ENCODE measurements at regions of chr17 and their contacts with region 1.

Region 1: GRCh38 chr17:64020056-64020766 is at the start of gene ICAM2:
- DNase-seq: peak; percentile 69
- ATAC-seq: peak; percentile 78
- H3K4me3 Mint-ChIP-seq: peak within 1 kb of the TSS; percentile 97
- H3K27ac Mint-ChIP-seq: peak within 1 kb of the TSS; percentile 99
- H3K4me1 Mint-ChIP-seq: peaks cover 81% of the 10 kb centered on the region
- H3K27me3 Mint-ChIP-seq: no peaks in the 10 kb centered on the region
- CTCF ChIP-seq: no peak
- total RNA-seq, gene ICAM2: 44.5 and 44.7 TPM in 2 replicates

Region 2: DNA sequence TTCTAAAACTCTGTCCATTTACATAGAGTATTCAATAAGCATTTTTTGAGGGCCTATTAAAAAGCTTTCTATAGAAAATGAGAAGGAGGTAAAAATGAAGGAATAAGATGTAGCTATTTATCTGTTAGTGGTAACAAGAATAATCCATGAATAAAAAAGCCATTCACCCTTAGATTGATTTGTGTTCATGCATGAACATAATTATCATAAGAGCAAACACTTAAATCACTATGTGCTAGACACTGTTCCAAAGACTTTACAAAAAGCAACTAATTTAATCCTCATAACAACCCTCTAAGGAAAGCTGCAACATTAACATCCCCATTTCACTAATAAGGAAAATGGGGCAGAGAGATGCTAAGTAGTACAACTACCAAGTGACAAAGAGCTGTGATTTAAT is 253.5 kb before region 1 on chr17:
- CTCF ChIA-PET with region 1: no interaction called
- POLR2A ChIA-PET with region 1: no interaction called
- intact Hi-C with region 1: no loop called
- DNase-seq: no peak
- ATAC-seq: no peak
- H3K4me3 Mint-ChIP-seq: no peak overlapping the region
- H3K27ac Mint-ChIP-seq: no peak overlapping the region
- H3K4me1 Mint-ChIP-seq: peaks cover 36% of the 10 kb centered on the region
- H3K27me3 Mint-ChIP-seq: no peaks in the 10 kb centered on the region
- CTCF ChIP-seq: no peak

Region 3: DNA sequence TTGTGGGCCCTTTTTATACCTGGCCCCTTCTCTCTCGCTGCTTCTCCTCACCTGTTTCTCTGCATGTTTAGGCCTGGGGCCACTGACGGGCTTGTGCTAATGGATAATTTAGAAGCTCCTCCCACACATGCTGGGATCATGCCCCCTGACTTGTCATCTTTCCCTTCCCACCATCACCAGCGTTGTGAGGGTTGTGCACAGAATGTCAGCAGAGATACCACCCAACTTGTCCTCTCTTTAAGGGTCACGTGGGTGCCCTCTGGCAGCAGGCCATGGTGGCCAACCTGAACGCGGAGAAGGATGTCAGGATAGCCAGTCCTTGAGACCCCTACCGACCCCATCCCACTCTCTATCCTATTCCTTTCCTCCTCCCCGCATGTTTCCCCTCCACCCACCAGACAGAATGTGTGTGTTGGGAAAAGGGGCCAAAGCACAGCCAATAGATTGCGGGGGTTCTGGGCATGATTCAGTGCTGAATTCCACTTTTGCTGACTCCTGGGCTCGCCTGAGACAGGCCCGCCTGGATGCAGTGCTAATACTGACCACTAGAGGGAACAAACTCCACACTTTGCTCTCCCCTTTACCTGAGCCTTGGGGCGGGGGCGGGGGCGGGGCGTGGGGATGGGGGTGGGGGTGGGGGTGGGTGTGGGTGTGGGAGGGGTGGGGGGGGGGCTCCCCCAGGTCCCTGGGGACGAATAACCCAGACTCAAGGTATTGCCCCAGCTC is 138.2 kb before region 1 on chr17 and contains the start of gene GH2:
- CTCF ChIA-PET with region 1: no interaction called
- POLR2A ChIA-PET with region 1: no interaction called
- intact Hi-C with region 1: no loop called
- DNase-seq: peak; percentile 36
- ATAC-seq: peak; percentile 89
- H3K4me3 Mint-ChIP-seq: no peak within 1 kb of the TSS
- H3K27ac Mint-ChIP-seq: no peak within 1 kb of the TSS
- H3K4me1 Mint-ChIP-seq: peaks cover 11% of the 10 kb centered on the region
- H3K27me3 Mint-ChIP-seq: no peaks in the 10 kb centered on the region
- CTCF ChIP-seq: no peak
- total RNA-seq, gene GH2: not detected in 2 replicates

Region 4: DNA sequence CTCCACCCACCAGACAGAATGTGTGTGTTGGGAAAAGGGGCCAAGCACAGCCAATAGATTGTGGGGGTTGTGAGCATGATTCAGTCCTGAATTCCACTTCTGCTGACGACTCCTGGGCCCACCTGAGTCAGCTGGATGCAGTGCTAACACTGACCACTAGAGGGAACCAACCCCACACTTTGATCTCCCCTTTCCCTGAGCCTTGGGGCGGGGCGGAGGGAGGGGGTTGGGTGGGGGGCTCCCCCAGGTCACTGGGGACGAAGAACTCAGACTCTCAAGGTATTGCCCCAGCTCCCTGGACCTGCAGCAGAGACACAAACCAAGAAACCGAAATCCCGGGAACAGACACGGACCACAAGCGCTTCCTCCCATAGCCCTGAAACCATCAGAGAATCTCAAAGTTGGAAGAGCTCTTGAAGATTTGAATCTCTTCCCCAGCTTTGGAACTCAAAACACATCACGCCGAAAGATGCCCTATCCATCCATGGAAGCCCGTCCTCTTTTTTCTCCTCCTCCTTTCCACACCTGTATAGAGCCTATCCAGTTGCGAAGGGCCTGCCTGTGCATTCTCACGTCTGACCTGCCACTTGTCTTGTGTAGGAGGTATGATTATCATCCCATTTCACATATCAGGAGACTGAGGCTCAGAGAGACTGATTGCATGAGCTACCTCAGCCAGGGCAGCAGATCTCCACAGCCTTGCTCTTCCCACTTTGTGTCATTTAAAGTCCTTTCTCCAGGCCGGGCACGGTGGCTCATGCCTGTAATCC is 108.4 kb before region 1 on chr17:
- CTCF ChIA-PET with region 1: interaction called, 102 read pairs
- POLR2A ChIA-PET with region 1: interaction called, 13 read pairs
- intact Hi-C with region 1: loop called (anchors 1 kb)
- DNase-seq: peak; percentile 59
- ATAC-seq: peak; percentile 57
- H3K4me3 Mint-ChIP-seq: no peak overlapping the region
- H3K27ac Mint-ChIP-seq: peak overlapping the region; percentile 35
- H3K4me1 Mint-ChIP-seq: peaks cover 52% of the 10 kb centered on the region
- H3K27me3 Mint-ChIP-seq: peaks cover 1% of the 10 kb centered on the region
- CTCF ChIP-seq: no peak

Region 5: GRCh38 chr17:63931099-63931561 is 89.1 kb before region 1 on chr17:
- CTCF ChIA-PET with region 1: interaction called, 11 read pairs
- POLR2A ChIA-PET with region 1: interaction called, 48 read pairs
- intact Hi-C with region 1: no loop called
- DNase-seq: peak; percentile 67
- ATAC-seq: peak; percentile 45
- H3K4me3 Mint-ChIP-seq: peak overlapping the region; percentile 98
- H3K27ac Mint-ChIP-seq: peak overlapping the region; percentile 96
- H3K4me1 Mint-ChIP-seq: peaks cover 89% of the 10 kb centered on the region
- H3K27me3 Mint-ChIP-seq: no peaks in the 10 kb centered on the region
- CTCF ChIP-seq: no peak

Region 6: DNA sequence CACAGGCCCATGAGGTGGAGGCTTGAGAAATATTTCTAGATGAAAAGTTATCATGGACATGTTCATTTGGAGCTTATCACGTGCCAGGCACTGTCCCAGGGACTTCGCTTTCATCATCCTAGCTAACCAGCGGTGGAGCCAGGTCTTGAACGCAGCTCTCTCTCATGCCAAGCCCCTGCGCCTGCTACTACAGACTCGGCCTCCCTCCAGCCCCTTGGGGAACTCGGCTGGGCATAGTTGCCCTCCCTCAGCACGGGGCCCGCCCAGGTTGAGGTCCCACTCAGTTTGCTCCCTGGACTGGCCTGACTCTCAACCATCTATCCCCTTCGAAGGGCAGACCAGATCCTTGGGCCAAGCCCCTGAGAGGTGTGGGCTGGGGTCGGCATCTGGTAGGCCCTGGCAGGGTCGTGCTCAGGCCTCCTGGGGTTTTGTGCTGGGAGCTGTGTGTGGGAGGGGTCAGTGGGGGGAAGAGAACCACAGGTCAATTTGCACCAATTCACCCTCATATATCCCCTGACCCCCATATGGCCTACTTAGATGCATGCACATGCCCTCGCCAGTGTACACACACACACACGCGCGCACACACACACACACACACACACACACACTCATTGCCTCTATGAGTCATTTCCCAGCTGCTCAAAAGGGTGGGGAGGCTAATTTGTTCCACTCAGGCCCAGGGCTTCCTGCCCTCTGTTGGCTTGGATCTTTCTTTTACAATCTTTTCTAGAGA is 35.4 kb before region 1 on chr17:
- CTCF ChIA-PET with region 1: interaction called, 21 read pairs
- POLR2A ChIA-PET with region 1: interaction called, 12 read pairs
- intact Hi-C with region 1: loop called (anchors 1 kb)
- DNase-seq: no peak
- ATAC-seq: peak; percentile 89
- H3K4me3 Mint-ChIP-seq: no peak overlapping the region
- H3K27ac Mint-ChIP-seq: no peak overlapping the region
- H3K4me1 Mint-ChIP-seq: peaks cover 16% of the 10 kb centered on the region
- H3K27me3 Mint-ChIP-seq: no peaks in the 10 kb centered on the region
- CTCF ChIP-seq: no peak

Region 7: GRCh38 chr17:64103391-64104364 is 83.5 kb after region 1 on chr17:
- CTCF ChIA-PET with region 1: no interaction called
- POLR2A ChIA-PET with region 1: no interaction called
- intact Hi-C with region 1: no loop called
- DNase-seq: no peak
- ATAC-seq: no peak
- H3K4me3 Mint-ChIP-seq: no peak overlapping the region
- H3K27ac Mint-ChIP-seq: no peak overlapping the region
- H3K4me1 Mint-ChIP-seq: no peaks in the 10 kb centered on the region
- H3K27me3 Mint-ChIP-seq: no peaks in the 10 kb centered on the region
- CTCF ChIP-seq: no peak

Region 8: DNA sequence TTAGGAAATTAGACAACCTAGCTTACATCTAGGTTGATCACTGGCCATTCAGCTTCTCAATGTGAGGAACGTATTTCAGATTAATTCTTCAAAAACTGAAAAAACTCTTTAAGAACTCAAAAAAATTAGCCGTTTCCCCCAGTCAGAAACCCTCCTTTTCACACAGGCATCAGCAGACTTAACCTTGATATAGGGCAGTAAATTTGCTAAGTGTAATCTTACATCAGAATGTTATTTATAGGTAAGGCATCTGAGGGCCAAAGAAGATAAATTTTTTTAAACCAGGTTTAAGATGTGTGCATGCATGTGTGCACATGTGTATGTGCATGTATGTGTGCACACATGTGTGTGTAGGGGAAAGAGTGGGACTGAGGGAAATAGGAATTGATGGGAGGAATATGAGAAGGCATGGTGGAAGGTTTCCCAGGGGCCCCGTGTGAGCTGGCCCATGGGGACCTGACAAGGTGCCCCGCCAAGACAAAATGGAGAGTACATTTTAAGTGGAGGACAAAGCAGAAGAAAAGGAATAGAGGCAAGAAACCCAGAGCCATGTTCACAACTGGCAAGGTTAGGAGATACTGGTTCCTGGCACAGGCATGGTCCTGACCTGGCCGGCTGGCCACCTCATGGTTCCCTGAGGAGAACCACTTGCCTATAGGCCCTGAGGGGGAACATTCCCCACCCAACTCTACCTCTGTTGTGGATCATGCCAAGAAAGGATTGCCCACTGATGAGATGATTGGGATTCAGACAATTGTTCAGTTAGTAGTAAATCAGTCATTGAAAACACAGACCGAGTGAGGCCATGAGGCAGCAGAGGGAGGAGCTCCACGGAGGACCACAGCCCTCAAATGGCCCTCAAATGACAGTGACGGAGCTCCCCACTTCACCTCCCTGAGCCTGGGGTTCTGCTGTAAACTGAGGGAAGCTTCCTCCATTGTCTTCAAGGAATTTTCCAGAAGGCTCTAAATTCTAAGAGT is 209.9 kb after region 1 on chr17:
- CTCF ChIA-PET with region 1: no interaction called
- POLR2A ChIA-PET with region 1: no interaction called
- intact Hi-C with region 1: no loop called
- DNase-seq: no peak
- ATAC-seq: no peak
- H3K4me3 Mint-ChIP-seq: no peak overlapping the region
- H3K27ac Mint-ChIP-seq: no peak overlapping the region
- H3K4me1 Mint-ChIP-seq: no peaks in the 10 kb centered on the region
- H3K27me3 Mint-ChIP-seq: no peaks in the 10 kb centered on the region
- CTCF ChIP-seq: no peak

Region 9: GRCh38 chr17:64262417-64263260 is 242.4 kb after region 1 on chr17 and contains the start of gene TEX2:
- CTCF ChIA-PET with region 1: no interaction called
- POLR2A ChIA-PET with region 1: interaction called, 3 read pairs
- intact Hi-C with region 1: loop called (anchors 2 kb)
- DNase-seq: peak; percentile 43
- ATAC-seq: peak; percentile 25
- H3K4me3 Mint-ChIP-seq: peak within 1 kb of the TSS; percentile 88
- H3K27ac Mint-ChIP-seq: peak within 1 kb of the TSS; percentile 80
- H3K4me1 Mint-ChIP-seq: peaks cover 19% of the 10 kb centered on the region
- H3K27me3 Mint-ChIP-seq: peaks cover 10% of the 10 kb centered on the region
- CTCF ChIP-seq: no peak
- total RNA-seq, gene TEX2: 8.1 TPM in 2 replicates